Activated T-helper 1 cell treated with anti-CD3 and anti-CD28 coated beads, Interleukin-12 subunit alpha, Interleukin-12 subunit beta, Interleukin-2, Interleukin-4 antibody, amounts not matched to agents 30 ng/mL and 10 ng/mL and 1 ng/mL, durations not matched to agents 14 hours and 24 hours and 36 hours (primary cell): ENCODE measurements at regions of chr19 and their contacts with region 1.

Region 1: GRCh38 chr19:9796113-9796773 is 22.6 kb downstream of the FBXL12 start:
- DNase-seq: peak; percentile 79
- H3K4me3 Mint-ChIP-seq: no peak overlapping the region
- H3K27ac Mint-ChIP-seq: peak overlapping the region; percentile 61
- H3K4me1 Mint-ChIP-seq: peaks cover 25% of the 10 kb centered on the region
- H3K27me3 Mint-ChIP-seq: no peaks in the 10 kb centered on the region

Region 2: GRCh38 chr19:9205501-9206113 is 590.6 kb before region 1 on chr19:
- intact Hi-C with region 1: loop called (anchors 1 kb)
- DNase-seq: peak; percentile 52
- H3K4me3 Mint-ChIP-seq: peak overlapping the region; percentile 37
- H3K27ac Mint-ChIP-seq: no peak overlapping the region
- H3K4me1 Mint-ChIP-seq: peaks cover 6% of the 10 kb centered on the region
- H3K27me3 Mint-ChIP-seq: no peaks in the 10 kb centered on the region

Region 3: GRCh38 chr19:9538183-9539058 is 257.8 kb before region 1 on chr19 and contains the start of gene ZNF426:
- intact Hi-C with region 1: loop called (anchors 5 kb)
- DNase-seq: peak; percentile 76
- H3K4me3 Mint-ChIP-seq: peak within 1 kb of the TSS; percentile 97
- H3K27ac Mint-ChIP-seq: peak within 1 kb of the TSS; percentile 98
- H3K4me1 Mint-ChIP-seq: peaks cover 5% of the 10 kb centered on the region
- H3K27me3 Mint-ChIP-seq: no peaks in the 10 kb centered on the region
- total RNA-seq, gene ZNF426: 10.2 and 10.3 TPM in 2 replicates

Region 4: DNA sequence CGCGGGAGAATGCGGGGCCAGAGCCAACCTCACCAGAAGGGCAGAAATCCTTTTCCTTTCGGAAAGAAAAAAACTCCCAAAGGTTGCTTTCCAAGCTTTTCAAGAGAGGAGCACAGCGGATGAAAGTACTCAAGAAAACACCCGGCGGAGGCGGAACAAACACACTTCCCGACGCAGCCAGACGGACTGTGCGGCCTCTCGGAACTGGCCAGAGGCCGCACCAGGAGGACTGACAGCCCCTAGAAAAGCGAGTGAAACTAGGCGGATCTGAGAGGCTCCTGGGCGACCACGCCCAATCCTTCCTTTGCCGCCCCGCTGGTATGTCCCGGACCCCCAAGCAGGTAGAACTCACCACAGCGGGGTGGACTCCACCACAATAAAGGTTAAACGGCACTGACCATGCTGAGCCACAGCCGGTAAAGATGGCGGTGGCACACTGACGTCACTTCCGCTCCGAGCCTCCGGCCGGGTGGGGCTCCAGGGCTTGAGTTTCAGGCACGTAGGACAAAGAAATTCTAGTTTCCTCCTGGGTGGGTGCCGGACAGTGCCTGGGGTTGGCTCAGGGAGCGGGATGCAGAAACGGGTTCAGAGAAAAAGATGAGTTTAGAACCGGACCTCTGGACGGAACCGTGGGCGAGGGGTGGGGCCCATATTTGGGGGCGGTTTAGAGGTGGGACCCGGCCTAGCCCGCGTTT is 121.4 kb before region 1 on chr19 and contains the start of gene ZNF562:
- intact Hi-C with region 1: loop called (anchors 2 kb)
- DNase-seq: peak; percentile 63
- H3K4me3 Mint-ChIP-seq: peak within 1 kb of the TSS; percentile 89
- H3K27ac Mint-ChIP-seq: peak within 1 kb of the TSS; percentile 95
- H3K4me1 Mint-ChIP-seq: peaks cover 21% of the 10 kb centered on the region
- H3K27me3 Mint-ChIP-seq: no peaks in the 10 kb centered on the region
- total RNA-seq, gene ZNF562: 13.2 and 13.8 TPM in 2 replicates

Region 5: DNA sequence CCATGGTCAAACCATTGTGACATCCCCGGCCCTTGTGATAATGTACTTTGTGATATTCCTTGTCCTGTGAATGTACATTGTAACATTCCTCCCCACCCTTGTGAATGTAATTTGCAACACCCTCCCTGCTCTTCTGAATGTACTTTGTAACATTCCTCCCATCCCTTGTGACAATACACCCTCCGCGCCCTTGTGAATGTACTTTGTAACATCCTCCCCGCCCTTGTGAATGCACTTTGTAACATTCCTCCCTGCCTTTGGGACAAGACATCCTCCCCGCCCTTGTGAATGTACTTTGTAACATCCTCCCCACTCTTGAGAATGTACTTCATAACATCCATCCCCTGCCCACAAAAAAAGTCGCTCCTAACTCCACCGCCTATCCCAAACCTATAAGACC is 44.8 kb before region 1 on chr19:
- intact Hi-C with region 1: no loop called
- DNase-seq: no peak
- H3K4me3 Mint-ChIP-seq: no peak overlapping the region
- H3K27ac Mint-ChIP-seq: no peak overlapping the region
- H3K4me1 Mint-ChIP-seq: no peaks in the 10 kb centered on the region
- H3K27me3 Mint-ChIP-seq: no peaks in the 10 kb centered on the region

Region 6: GRCh38 chr19:9806803-9807202 is 10.6 kb after region 1 on chr19:
- intact Hi-C with region 1: no loop called
- DNase-seq: no peak
- H3K4me3 Mint-ChIP-seq: no peak overlapping the region
- H3K27ac Mint-ChIP-seq: no peak overlapping the region
- H3K4me1 Mint-ChIP-seq: peaks cover 10% of the 10 kb centered on the region
- H3K27me3 Mint-ChIP-seq: no peaks in the 10 kb centered on the region

Region 7: GRCh38 chr19:9818734-9819589 is 22.7 kb after region 1 on chr19 and contains the start of gene FBXL12:
- intact Hi-C with region 1: loop called (anchors 1 kb)
- DNase-seq: peak; percentile 100
- H3K4me3 Mint-ChIP-seq: peak within 1 kb of the TSS; percentile 90
- H3K27ac Mint-ChIP-seq: peak within 1 kb of the TSS; percentile 87
- H3K4me1 Mint-ChIP-seq: peaks cover 27% of the 10 kb centered on the region
- H3K27me3 Mint-ChIP-seq: no peaks in the 10 kb centered on the region
- total RNA-seq, gene FBXL12: 19.4 and 20.7 TPM in 2 replicates